ENCODE measurements at regions of chr3 and their contacts with region 1.

Region 1: DNA sequence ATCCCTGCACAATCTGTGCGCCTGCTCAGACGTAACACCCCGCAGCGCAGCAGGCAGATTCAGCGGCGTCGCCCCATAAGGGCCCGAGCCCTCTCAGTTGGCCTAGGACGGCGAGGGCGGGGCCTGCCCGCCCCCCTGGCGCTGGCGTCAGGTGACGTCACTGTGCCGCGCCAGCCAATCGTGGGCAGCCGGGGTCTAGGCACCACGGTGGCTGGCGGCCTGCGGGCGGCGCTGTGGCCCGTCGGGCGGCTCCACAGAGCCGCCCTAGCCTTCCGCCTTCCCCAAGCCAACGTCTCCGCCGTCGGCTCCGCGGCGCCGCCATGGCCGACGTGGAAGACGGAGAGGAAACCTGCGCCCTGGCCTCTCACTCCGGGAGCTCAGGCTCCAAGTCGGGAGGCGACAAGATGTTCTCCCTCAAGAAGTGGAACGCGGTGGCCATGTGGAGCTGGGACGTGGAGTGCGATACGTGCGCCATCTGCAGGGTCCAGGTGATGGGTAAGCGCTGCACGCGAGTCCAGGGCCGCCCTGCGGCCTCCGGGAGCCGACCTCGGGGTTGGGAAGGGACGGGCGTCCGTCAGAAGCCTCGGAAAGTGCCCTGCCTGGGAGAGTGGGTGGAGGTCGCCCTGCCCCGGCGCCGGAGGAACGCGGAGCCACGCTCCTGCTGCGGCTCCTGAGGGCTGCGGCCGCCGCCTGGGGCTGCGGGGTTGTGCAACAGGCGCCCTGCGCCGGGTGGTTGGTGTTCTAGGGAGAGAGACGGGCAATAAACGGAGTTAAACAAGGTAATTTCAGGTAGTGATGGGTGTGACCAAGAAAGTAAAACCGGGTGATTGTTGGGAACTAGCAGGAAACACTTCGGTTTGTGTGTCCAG is at the start of gene RNF7:
- DNase-seq: peak; percentile 99
- ATAC-seq: peak; percentile 95
- H3K4me3 Mint-ChIP-seq: peak within 1 kb of the TSS; percentile 99
- H3K27ac Mint-ChIP-seq: peak within 1 kb of the TSS; percentile 99
- H3K4me1 Mint-ChIP-seq: peaks cover 28% of the 10 kb centered on the region
- H3K27me3 Mint-ChIP-seq: peaks cover 2% of the 10 kb centered on the region
- total RNA-seq, gene RNF7: 52.5 to 53.9 TPM

Region 2: DNA sequence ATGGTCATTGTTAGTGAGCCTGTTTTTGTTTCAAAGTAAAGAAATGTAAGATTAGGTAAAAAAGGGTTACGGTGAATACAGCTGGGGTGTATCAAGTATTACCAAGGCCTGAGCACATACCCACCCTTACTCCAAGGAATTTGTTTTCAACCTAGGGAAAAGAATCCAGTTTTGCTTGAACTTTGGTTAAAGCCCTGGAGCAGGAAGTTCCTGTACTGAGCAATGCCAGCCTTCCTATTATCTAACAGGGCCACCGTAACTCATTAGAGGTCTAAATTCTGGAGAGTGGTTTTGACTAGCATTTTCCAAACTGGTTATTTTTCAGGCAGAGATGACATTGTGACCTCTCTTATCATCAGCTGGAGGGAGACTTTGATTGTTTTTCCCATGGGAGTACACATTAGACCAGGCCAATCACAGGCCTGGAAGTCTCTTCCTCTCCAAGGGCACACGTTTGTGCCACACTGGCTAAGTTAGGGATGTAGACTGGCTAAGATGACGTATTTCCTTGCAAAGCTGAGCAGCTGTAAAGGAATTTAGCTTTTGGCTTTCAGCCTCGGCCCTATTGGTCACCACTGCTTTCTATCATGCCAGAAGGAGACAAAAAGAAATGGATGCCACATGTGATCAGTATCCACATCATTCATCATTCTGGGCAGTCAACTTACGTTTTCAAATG is 27.5 kb before region 1 on chr3:
- POLR2A ChIA-PET with region 1: no interaction called
- DNase-seq: no peak
- ATAC-seq: no peak
- H3K4me3 Mint-ChIP-seq: no peak overlapping the region
- H3K27ac Mint-ChIP-seq: no peak overlapping the region
- H3K4me1 Mint-ChIP-seq: no peaks in the 10 kb centered on the region
- H3K27me3 Mint-ChIP-seq: no peaks in the 10 kb centered on the region

Region 3: DNA sequence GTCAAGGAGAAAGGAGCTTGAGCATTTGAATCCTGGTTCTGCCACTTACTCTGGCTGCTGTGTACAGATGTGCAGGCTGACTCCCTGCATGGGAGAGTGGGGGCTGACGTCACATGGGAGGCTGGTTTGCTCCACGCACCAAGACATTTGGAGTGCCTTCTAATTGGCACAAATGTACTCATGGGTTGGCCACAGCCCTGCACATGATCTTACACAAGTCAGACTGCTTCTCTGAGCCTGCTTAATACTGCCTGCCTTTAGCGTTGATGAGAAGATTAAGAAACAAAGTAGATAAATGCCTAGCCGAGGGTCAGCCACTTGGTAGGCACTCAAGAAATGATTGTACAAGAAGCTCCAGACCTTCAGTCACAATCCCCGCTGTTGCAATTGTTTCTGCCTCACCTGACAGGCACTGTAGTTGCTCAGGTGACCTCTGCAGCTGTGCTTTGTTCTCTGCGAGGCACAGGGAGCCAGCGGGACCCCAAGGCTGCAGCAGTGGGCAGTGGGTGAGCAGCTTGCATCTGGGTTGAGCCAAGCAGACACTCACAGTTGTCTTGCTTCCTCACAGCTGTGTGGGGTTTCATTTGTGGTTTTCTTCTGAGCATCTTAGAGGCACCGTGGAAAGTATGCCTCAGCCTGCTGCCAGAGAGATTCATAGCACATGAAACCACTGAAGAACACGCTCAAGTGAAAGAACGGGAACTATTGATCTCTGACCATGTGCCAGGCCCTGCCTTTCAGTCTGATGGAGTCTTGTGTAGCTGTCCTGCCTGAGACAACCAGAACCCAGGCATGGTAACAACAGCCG is 58.0 kb after region 1 on chr3:
- POLR2A ChIA-PET with region 1: interaction called, 25 read pairs
- DNase-seq: peak; percentile 63
- ATAC-seq: peak; percentile 79
- H3K4me3 Mint-ChIP-seq: peak overlapping the region; percentile 90
- H3K27ac Mint-ChIP-seq: peak overlapping the region; percentile 98
- H3K4me1 Mint-ChIP-seq: peaks cover 41% of the 10 kb centered on the region
- H3K27me3 Mint-ChIP-seq: peaks cover 2% of the 10 kb centered on the region